ENCODE measurements at regions of chr9 and their contacts with region 1.

Region 1: GRCh38 chr9:110125207-110125751 is 82.7 kb downstream of the C9orf152 start:
- DNase-seq: no peak
- ATAC-seq: no peak
- H3K4me3 Mint-ChIP-seq: peak overlapping the region; percentile 71
- H3K27ac Mint-ChIP-seq: peak overlapping the region; percentile 85
- H3K4me1 Mint-ChIP-seq: peaks cover 97% of the 10 kb centered on the region
- H3K27me3 Mint-ChIP-seq: no peaks in the 10 kb centered on the region
- CTCF ChIP-seq: no peak

Region 2: GRCh38 chr9:110048403-110048975 is 76.8 kb before region 1 on chr9:
- CTCF ChIA-PET with region 1: no interaction called
- POLR2A ChIA-PET with region 1: interaction called, 9 read pairs
- intact Hi-C with region 1: loop called (anchors 2 kb)
- DNase-seq: peak; percentile 85
- ATAC-seq: peak; percentile 94
- H3K4me3 Mint-ChIP-seq: peak overlapping the region; percentile 99
- H3K27ac Mint-ChIP-seq: peak overlapping the region; percentile 91
- H3K4me1 Mint-ChIP-seq: peaks cover 54% of the 10 kb centered on the region
- H3K27me3 Mint-ChIP-seq: no peaks in the 10 kb centered on the region
- CTCF ChIP-seq: no peak

Region 3: GRCh38 chr9:110110154-110110553 is 15.1 kb before region 1 on chr9:
- CTCF ChIA-PET with region 1: interaction called, 4 read pairs
- POLR2A ChIA-PET with region 1: interaction called, 9 read pairs
- intact Hi-C with region 1: loop called (anchors 2 kb)
- DNase-seq: no peak
- ATAC-seq: peak; percentile 81
- H3K4me3 Mint-ChIP-seq: peak overlapping the region; percentile 19
- H3K27ac Mint-ChIP-seq: peak overlapping the region; percentile 35
- H3K4me1 Mint-ChIP-seq: peaks cover 85% of the 10 kb centered on the region
- H3K27me3 Mint-ChIP-seq: no peaks in the 10 kb centered on the region
- CTCF ChIP-seq: no peak

Region 4: GRCh38 chr9:110143950-110144545 is 18.8 kb after region 1 on chr9:
- CTCF ChIA-PET with region 1: interaction called, 6 read pairs
- POLR2A ChIA-PET with region 1: interaction called, 60 read pairs
- intact Hi-C with region 1: loop called (anchors 1 kb)
- DNase-seq: no peak
- ATAC-seq: peak; percentile 84
- H3K4me3 Mint-ChIP-seq: peak overlapping the region; percentile 73
- H3K27ac Mint-ChIP-seq: peak overlapping the region; percentile 91
- H3K4me1 Mint-ChIP-seq: peaks cover 95% of the 10 kb centered on the region
- H3K27me3 Mint-ChIP-seq: no peaks in the 10 kb centered on the region
- CTCF ChIP-seq: no peak

Measured in activated B cell treated with CpG ODN at 0.5 μM for 24 hours (primary cell).